Posterior vena cava (tissue), 2 donors: ENCODE measurements at regions of chr7 and their contacts with region 1.

Region 1: DNA sequence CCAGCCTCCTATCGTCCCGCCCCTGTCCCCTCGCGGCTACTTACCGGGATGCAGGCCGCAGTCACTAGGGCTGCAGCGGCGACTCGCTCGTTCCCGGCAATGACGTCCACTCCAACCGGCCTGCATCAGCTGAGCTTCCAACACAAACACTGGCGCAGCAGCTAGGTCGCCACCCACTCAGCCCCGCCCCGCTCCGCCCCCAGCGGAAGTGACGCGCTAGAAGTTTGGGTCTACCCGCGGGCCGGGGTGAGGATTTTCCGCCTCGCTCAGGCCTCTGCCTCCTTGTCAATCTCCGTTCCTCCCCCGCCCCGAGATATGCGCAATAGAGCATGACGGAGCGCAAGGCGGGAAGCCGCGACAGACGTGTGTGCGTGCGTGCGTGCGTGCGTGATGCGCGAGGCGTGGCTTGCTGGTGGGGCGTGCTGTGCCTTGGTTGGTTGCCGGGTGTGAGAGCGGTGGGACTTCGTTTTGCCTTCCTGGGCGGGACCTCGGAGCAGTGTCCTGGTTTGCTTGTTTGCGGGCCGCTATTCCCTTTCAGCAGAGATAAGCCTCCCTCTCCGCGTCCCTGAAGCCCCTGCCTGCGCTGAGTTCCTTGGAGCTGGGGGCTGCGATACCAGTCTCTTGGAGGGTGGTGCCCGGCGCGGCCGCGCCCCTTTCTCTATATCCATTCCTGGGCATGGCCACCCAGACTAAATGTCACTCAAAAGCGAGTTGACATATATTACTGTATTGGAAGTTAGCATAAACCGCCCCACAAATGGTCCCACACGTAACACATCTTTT is at the start of gene PNPLA8:
- DNase-seq: peak; percentile 100
- total RNA-seq, gene PNPLA8: 39.6 to 46.6 TPM

Region 2: GRCh38 chr7:108308903-108309302 is 217.3 kb before region 1 on chr7:
- intact Hi-C with region 1: no loop called
- DNase-seq: no peak

Region 3: GRCh38 chr7:108569381-108570145 is 43.4 kb after region 1 on chr7 and contains the starts of genes DNAJB9 and THAP5:
- intact Hi-C with region 1: loop called in 1 of 2 experiments (anchors 5 kb)
- DNase-seq: peak; percentile 100
- total RNA-seq, gene DNAJB9: 29.2 to 30.0 TPM
- total RNA-seq, gene THAP5: 21.3 to 27.9 TPM

Region 4: GRCh38 chr7:108575156-108575555 is 49.0 kb after region 1 on chr7:
- intact Hi-C with region 1: loop called in 1 of 2 experiments (anchors 1 kb)
- DNase-seq: no peak